GM12878 (cell line): ENCODE measurements at regions of chr13 and their contacts with region 1.

Region 1: DNA sequence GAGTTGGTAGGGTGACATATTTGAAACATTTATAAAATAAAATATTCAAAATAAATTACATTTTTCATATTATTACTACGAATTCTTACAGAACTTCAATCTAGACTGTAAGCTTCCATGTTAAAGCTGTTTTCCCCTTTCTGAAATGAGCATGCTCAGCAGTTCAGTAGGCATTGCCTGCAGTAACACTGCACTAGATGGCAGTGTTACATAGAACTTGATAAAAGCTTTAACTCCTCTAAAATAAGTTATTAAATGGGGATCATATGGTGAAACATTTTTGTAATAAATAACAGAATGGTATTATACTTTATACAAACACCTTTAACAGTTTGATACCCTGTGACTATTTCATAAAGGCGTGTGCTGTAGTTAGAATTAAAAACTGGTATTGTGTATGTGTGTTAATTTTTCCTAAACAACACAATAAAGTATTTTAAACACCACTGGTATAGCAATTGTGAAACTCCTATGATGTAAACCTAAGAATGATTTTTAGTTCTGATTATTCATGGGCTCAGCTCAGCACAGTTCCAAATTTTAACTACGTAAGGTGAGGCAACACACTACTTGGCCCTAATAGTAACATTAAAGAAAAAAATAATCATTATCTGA is 11.6 kb upstream of the GPR18 start:
- DNase-seq: no peak
- ATAC-seq: peak; percentile 89
- H3K4me3 ChIP-seq: no peak overlapping the region
- H3K27ac ChIP-seq: peak overlapping the region; percentile 37; the same call in 1 of the 2 replicates
- H3K4me1 ChIP-seq: peaks cover 24% of the 10 kb centered on the region
- H3K27me3 ChIP-seq: no peaks in the 10 kb centered on the region
- CTCF ChIP-seq: peak; percentile 74 to 85 (median 81)
- EP300 ChIP-seq: no peak
- POLR2A ChIP-seq: no peak
- RAD21 ChIP-seq: peak; percentile 91

Region 2: GRCh38 chr13:99176309-99177276 is 93.1 kb before region 1 on chr13:
- CTCF ChIA-PET with region 1: interaction called, 470 read pairs
- POLR2A ChIA-PET with region 1: interaction called, 4 read pairs
- RAD21 ChIA-PET with region 1: interaction called, 338 read pairs
- SMC1A ChIA-PET with region 1: interaction called, 269 read pairs
- in situ Hi-C with region 1: loop called (anchors 5 kb)
- intact Hi-C with region 1: loop called (anchors 1 kb)
- DNase-seq: no peak
- ATAC-seq: peak; percentile 96
- H3K4me3 ChIP-seq: no peak overlapping the region
- H3K27ac ChIP-seq: no peak overlapping the region
- H3K4me1 ChIP-seq: peaks cover 4% of the 10 kb centered on the region
- H3K27me3 ChIP-seq: peaks cover 0 to 2% of the 10 kb centered on the region in 2 experiments; a peak in 1 of 4 replicates
- CTCF ChIP-seq: peak; percentile 84 to 96 (median 93)
- EP300 ChIP-seq: no peak
- POLR2A ChIP-seq: no peak
- RAD21 ChIP-seq: peak; percentile 99

Region 3: DNA sequence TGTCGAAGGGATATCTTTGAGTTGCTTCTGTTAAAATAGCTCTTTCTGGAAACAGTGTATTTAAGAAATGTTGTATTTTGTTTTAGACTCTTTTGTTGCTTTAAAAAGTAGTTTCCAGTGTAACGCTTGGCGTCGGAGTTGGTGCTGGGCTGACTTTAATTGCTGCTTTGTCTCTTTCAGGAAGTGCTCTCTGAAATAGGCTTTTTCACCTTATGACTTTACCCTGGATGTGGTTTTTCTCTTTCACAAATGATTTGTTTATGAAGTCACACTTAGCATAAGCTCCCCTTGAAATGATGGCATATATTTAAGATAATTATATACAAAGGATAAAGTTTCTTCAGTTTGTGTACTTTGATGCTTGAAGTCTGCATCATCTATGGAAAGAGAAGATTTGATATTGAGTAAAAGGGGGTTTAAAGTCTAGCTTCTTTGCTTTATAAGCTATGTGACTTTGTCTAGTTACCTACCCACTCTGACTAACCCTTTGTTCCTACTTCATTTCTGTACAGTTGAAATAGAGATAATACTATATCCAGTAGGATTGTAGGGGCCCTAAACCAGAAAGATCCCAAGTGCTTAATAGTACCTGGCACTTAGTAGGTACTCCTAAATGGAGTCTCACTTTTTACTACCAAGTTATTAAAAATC is 11.4 kb before region 1 on chr13 and contains the start of gene GPR18:
- CTCF ChIA-PET with region 1: interaction called, 68 read pairs
- POLR2A ChIA-PET with region 1: no interaction called
- RAD21 ChIA-PET with region 1: interaction called, 13 read pairs
- SMC1A ChIA-PET with region 1: interaction called, 48 read pairs
- in situ Hi-C with region 1: no loop called
- intact Hi-C with region 1: no loop called
- DNase-seq: peak; percentile 67
- ATAC-seq: peak; percentile 89
- H3K4me3 ChIP-seq: peak within 1 kb of the TSS; percentile 64
- H3K27ac ChIP-seq: peak within 1 kb of the TSS; percentile 38
- H3K4me1 ChIP-seq: peaks cover 21% of the 10 kb centered on the region
- H3K27me3 ChIP-seq: no peaks in the 10 kb centered on the region
- CTCF ChIP-seq: no peak
- EP300 ChIP-seq: peak in 1 of 2 experiments; percentile 58; a peak in 1 of 4 replicates
- POLR2A ChIP-seq: no peak
- RAD21 ChIP-seq: peak; percentile 22; the same call in 1 of the 2 replicates
- polyA plus RNA-seq, gene GPR18: 3.9 to 8.4 TPM

Region 4: DNA sequence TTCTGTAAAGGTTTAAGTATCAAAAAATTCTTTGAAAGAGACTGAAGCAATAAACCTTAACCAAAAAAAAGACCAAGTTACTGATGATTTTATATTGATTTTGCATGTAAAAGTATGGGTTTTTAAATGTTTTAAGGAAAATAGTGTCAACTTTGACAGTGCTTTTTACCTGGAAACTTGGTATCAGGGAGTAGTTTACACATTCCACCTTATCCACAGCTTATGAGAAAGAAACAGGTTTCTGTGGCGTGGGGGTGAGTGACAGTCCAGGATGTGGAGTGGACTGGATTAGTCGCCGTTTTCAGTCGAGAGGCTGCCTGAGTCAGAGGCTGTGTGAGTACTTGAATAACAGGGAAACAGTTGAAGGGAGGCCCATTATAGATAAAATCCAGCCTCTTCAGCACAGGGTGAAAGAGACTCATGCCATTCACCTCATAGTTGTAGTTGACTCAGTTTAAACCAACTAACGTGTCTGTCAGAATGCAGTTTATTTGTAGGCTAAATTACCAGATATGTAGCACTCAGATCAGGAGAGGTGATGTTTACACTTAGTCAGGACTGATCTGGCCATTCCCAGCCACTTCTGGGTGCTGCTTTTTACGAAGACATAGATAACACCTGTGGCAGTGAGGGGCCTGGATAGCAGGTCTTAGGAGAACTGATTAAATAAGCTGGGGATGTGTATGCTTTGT is 38.1 kb after region 1 on chr13:
- CTCF ChIA-PET with region 1: interaction called, 61 read pairs
- POLR2A ChIA-PET with region 1: interaction called, 4 read pairs
- RAD21 ChIA-PET with region 1: interaction called, 247 read pairs
- SMC1A ChIA-PET with region 1: interaction called, 264 read pairs
- in situ Hi-C with region 1: no loop called
- intact Hi-C with region 1: no loop called
- DNase-seq: no peak
- ATAC-seq: peak; percentile 50
- H3K4me3 ChIP-seq: peak overlapping the region; percentile 98
- H3K27ac ChIP-seq: peak overlapping the region; percentile 93
- H3K4me1 ChIP-seq: peaks cover 49% of the 10 kb centered on the region
- H3K27me3 ChIP-seq: no peaks in the 10 kb centered on the region
- CTCF ChIP-seq: no peak
- EP300 ChIP-seq: no peak
- POLR2A ChIP-seq: no peak; the same call in 1 of the 2 replicates
- RAD21 ChIP-seq: no peak

Region 5: GRCh38 chr13:99366075-99366987 is 96.6 kb after region 1 on chr13:
- CTCF ChIA-PET with region 1: interaction called, 440 read pairs
- POLR2A ChIA-PET with region 1: interaction called, 3 read pairs
- RAD21 ChIA-PET with region 1: interaction called, 80 read pairs
- SMC1A ChIA-PET with region 1: interaction called, 69 read pairs
- in situ Hi-C with region 1: no loop called
- intact Hi-C with region 1: loop called (anchors 1 kb)
- DNase-seq: peak; percentile 87
- ATAC-seq: peak; percentile 67
- H3K4me3 ChIP-seq: peak overlapping the region; percentile 23; the same call in 1 of the 2 replicates
- H3K27ac ChIP-seq: peak overlapping the region; percentile 93
- H3K4me1 ChIP-seq: peaks cover 54% of the 10 kb centered on the region
- H3K27me3 ChIP-seq: no peaks in the 10 kb centered on the region
- CTCF ChIP-seq: no peak
- EP300 ChIP-seq: peak; percentile 51 to 78; a peak in 1 of 4 replicates
- POLR2A ChIP-seq: 0 out of 2 replicates have a peak, but pooled peaks have one; percentile 19
- RAD21 ChIP-seq: peak; percentile 5; the same call in 1 of the 2 replicates

Region 6: GRCh38 chr13:99436686-99437416 is 167.1 kb after region 1 on chr13:
- CTCF ChIA-PET with region 1: interaction called, 427 read pairs
- POLR2A ChIA-PET with region 1: interaction called, 24 read pairs
- RAD21 ChIA-PET with region 1: interaction called, 293 read pairs
- SMC1A ChIA-PET with region 1: interaction called, 300 read pairs
- in situ Hi-C with region 1: loop called (anchors 5 kb)
- intact Hi-C with region 1: loop called (anchors 1 kb)
- DNase-seq: no peak
- ATAC-seq: peak; percentile 51
- H3K4me3 ChIP-seq: no peak overlapping the region
- H3K27ac ChIP-seq: peak overlapping the region; percentile 65
- H3K4me1 ChIP-seq: peaks cover 50% of the 10 kb centered on the region
- H3K27me3 ChIP-seq: peaks cover 2 to 4% of the 10 kb centered on the region in 2 experiments; a peak in 2 of 4 replicates
- CTCF ChIP-seq: peak; percentile 100; a peak in 5 of 6 replicates
- EP300 ChIP-seq: peak; percentile 35 to 51; a peak in 2 of 4 replicates
- POLR2A ChIP-seq: no peak
- RAD21 ChIP-seq: peak; percentile 97